A549 (cell line): ENCODE measurements at regions of chr15 and their contacts with region 1.

Region 1: GRCh38 chr15:84898761-84899160 is 14.3 kb downstream of the SLC28A1 start:
- DNase-seq: no peak
- ATAC-seq: 0 out of 6 replicates have a peak, but pooled peaks of 1 of the 2 experiments have one; percentile 24
- H3K4me3 ChIP-seq: no peak overlapping the region
- H3K27ac ChIP-seq: peak overlapping the region in 1 of 2 experiments; percentile 37; a peak in 1 of 6 replicates
- H3K4me1 ChIP-seq: peaks cover 4% of the 10 kb centered on the region; the same call in 1 of the 3 replicates
- CTCF ChIP-seq: no peak
- EP300 ChIP-seq: no peak
- POLR2A ChIP-seq: no peak
- RAD21 ChIP-seq: no peak

Region 2: DNA sequence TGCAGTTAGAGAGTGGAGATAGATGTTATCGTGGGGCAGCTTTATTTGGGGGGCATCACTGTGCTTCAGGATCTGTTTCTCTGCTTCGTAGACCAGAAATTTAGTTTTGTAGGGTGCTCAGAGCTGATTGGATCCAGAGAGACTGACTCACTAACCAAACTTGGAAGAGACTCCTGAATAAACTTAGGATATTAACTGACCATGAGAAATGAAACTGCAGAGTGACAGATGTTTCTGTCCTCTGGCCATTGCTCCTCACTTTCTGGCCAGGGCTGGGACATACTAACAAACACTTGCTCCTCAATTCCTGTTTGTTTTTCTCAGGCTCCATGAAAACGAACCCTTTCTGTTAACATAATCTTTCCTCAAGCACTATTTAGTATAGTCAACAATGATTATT is 146.1 kb before region 1 on chr15:
- CTCF ChIA-PET with region 1: no interaction called
- POLR2A ChIA-PET with region 1: no interaction called
- DNase-seq: no peak
- ATAC-seq: no peak
- H3K4me3 ChIP-seq: no peak overlapping the region
- H3K27ac ChIP-seq: peak overlapping the region in 1 of 2 experiments; percentile 30; a peak in 4 of 6 replicates
- H3K4me1 ChIP-seq: peaks cover 66% of the 10 kb centered on the region
- CTCF ChIP-seq: no peak
- EP300 ChIP-seq: no peak
- POLR2A ChIP-seq: no peak
- RAD21 ChIP-seq: no peak

Region 3: GRCh38 chr15:84826369-84826823 is 72.4 kb before region 1 on chr15:
- CTCF ChIA-PET with region 1: no interaction called
- POLR2A ChIA-PET with region 1: no interaction called
- DNase-seq: peak; percentile 74 to 75
- ATAC-seq: peak; percentile 78 to 94
- H3K4me3 ChIP-seq: no peak overlapping the region
- H3K27ac ChIP-seq: peak overlapping the region; percentile 20 to 29; a peak in 2 of 6 replicates
- H3K4me1 ChIP-seq: peaks cover 6% of the 10 kb centered on the region; the same call in 2 of the 3 replicates
- CTCF ChIP-seq: peak; percentile 66
- EP300 ChIP-seq: no peak
- POLR2A ChIP-seq: no peak
- RAD21 ChIP-seq: peak; percentile 86 to 94

Region 4: DNA sequence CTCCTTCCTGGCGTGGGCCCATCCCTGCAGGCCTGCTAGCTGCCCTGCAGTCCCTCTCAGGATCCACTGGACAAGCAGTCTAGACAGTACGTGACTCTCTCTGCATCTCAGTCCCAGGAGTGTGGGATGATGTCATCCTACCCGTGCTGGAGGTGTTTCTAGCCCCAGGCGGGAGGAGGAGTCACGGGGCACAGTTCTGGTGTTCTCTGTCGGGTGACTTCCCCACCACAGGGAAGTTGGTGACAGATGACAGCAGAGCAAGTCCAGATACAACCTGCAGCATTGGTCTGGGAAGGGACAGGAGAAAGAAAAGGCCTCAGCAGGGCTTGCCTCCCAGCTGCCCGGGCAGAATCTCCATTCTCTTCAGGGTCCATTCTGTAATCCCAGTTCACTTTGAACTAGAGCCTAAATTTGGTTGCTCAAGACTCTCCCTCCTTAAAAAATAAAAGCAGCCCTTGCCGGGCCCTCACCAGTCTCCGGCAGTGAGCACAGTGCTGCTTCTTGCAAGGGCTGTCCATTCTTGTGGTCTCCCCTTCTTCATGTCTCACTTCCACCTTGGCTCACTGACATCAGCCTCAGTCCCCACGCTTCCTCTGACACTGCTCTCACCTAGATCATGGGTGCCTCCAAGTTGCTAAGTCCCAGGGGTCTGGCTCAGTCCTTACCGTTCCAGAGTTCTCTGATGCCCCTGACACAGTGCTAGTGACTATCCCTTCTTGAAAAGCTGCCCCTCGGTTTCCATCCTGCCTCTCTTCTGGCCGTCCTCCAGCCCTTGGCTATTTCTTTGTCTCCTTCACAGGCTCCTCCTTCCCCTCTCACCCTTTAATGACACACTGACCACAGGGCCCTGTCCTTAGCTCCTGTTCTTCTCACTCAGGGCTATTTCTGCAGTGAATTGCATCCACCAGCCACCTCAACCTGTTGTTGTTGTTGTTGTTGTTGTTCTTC is 16.5 kb after region 1 on chr15:
- CTCF ChIA-PET with region 1: interaction called, 12 read pairs
- POLR2A ChIA-PET with region 1: no interaction called
- DNase-seq: peak; percentile 93 to 98
- ATAC-seq: peak; percentile 77 to 81
- H3K4me3 ChIP-seq: no peak overlapping the region
- H3K27ac ChIP-seq: peak overlapping the region; percentile 83 to 88
- H3K4me1 ChIP-seq: peaks cover 65% of the 10 kb centered on the region
- CTCF ChIP-seq: no peak
- EP300 ChIP-seq: peak; percentile 34 to 61; a peak in 2 of 5 replicates
- POLR2A ChIP-seq: peak; percentile 44; the same call in 1 of the 2 replicates
- RAD21 ChIP-seq: no peak; a peak in 1 of 5 replicates

Region 5: GRCh38 chr15:85125056-85125661 is 226.4 kb after region 1 on chr15:
- CTCF ChIA-PET with region 1: no interaction called
- POLR2A ChIA-PET with region 1: no interaction called
- DNase-seq: no peak
- ATAC-seq: peak; percentile 55 to 68; a peak in 5 of 6 replicates
- H3K4me3 ChIP-seq: no peak overlapping the region
- H3K27ac ChIP-seq: peak overlapping the region in 1 of 2 experiments; percentile 3; a peak in 2 of 6 replicates
- H3K4me1 ChIP-seq: peaks cover 13% of the 10 kb centered on the region
- CTCF ChIP-seq: no peak
- EP300 ChIP-seq: no peak
- POLR2A ChIP-seq: no peak
- RAD21 ChIP-seq: no peak